ENCODE measurements at regions of chr1 and their contacts with region 1.

Region 1: GRCh38 chr1:69862906-69863305 is 295.2 kb downstream of the LRRC7 start:
- H3K4me3 Mint-ChIP-seq: no peak overlapping the region
- H3K27ac Mint-ChIP-seq: no peak overlapping the region
- H3K4me1 Mint-ChIP-seq: no peaks in the 10 kb centered on the region
- H3K27me3 Mint-ChIP-seq: no peaks in the 10 kb centered on the region

Region 2: GRCh38 chr1:69878338-69878737 is 15.4 kb after region 1 on chr1:
- intact Hi-C with region 1: loop called (anchors 1 kb)
- H3K4me3 Mint-ChIP-seq: no peak overlapping the region
- H3K27ac Mint-ChIP-seq: no peak overlapping the region
- H3K4me1 Mint-ChIP-seq: peaks cover 9% of the 10 kb centered on the region
- H3K27me3 Mint-ChIP-seq: no peaks in the 10 kb centered on the region

Measured in dendritic cell treated with granulocyte-macrophage colony-stimulating factor and Interleukin-4, amounts not matched to agents 40 ng/mL and 50 ng/mL, for 4 days (primary cell).